ENCODE measurements at regions of chr3 and their contacts with region 1.

Region 1: GRCh38 chr3:196528639-196529233 is 13.6 kb upstream of the SMCO1 start:
- DNase-seq: peak; percentile 87
- ATAC-seq: peak; percentile 89
- H3K4me3 Mint-ChIP-seq: peak overlapping the region; percentile 53
- H3K27ac Mint-ChIP-seq: no peak overlapping the region
- H3K4me1 Mint-ChIP-seq: peaks cover 12% of the 10 kb centered on the region
- H3K27me3 Mint-ChIP-seq: peaks cover 11% of the 10 kb centered on the region
- CTCF ChIP-seq: peak; percentile 81

Region 2: GRCh38 chr3:195806211-195806915 is 722.4 kb before region 1 on chr3:
- CTCF ChIA-PET with region 1: no interaction called
- POLR2A ChIA-PET with region 1: no interaction called
- DNase-seq: peak; percentile 73
- ATAC-seq: peak; percentile 77
- H3K4me3 Mint-ChIP-seq: peak overlapping the region; percentile 39
- H3K27ac Mint-ChIP-seq: peak overlapping the region; percentile 98
- H3K4me1 Mint-ChIP-seq: peaks cover 84% of the 10 kb centered on the region
- H3K27me3 Mint-ChIP-seq: peaks cover 4% of the 10 kb centered on the region
- CTCF ChIP-seq: no peak

Region 3: DNA sequence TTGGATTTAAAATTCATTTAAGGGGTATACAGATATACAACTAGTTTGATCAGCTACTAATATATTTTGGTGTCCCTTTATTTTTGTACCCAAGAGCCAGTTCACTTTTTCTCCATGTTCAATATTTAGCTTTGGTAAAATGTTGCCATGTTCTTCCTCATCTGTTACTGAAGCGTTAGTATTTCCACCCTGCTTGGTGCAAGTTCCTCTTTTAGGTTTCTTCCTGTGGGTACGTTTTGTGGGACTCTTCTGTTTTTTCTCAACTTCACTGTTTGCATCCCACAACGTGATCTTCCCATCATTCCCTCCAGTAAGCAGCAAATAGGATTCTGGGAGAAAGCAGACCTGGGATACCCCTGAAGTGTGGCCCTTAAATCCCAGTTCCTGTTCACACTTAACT is 25.5 kb after region 1 on chr3:
- CTCF ChIA-PET with region 1: interaction called, 10 read pairs
- POLR2A ChIA-PET with region 1: no interaction called
- DNase-seq: no peak
- ATAC-seq: no peak
- H3K4me3 Mint-ChIP-seq: no peak overlapping the region
- H3K27ac Mint-ChIP-seq: no peak overlapping the region
- H3K4me1 Mint-ChIP-seq: no peaks in the 10 kb centered on the region
- H3K27me3 Mint-ChIP-seq: peaks cover 2% of the 10 kb centered on the region; the same call in 1 of the 2 replicates
- CTCF ChIP-seq: no peak

Region 4: GRCh38 chr3:196568246-196569002 is 39.7 kb after region 1 on chr3 and contains the starts of genes FBXO45 and WDR53:
- CTCF ChIA-PET with region 1: interaction called, 15 read pairs
- POLR2A ChIA-PET with region 1: interaction called, 7 read pairs
- DNase-seq: peak; percentile 96
- ATAC-seq: peak; percentile 94
- H3K4me3 Mint-ChIP-seq: peak within 1 kb of the TSS; percentile 99
- H3K27ac Mint-ChIP-seq: peak within 1 kb of the TSS; percentile 98
- H3K4me1 Mint-ChIP-seq: peaks cover 15% of the 10 kb centered on the region
- H3K27me3 Mint-ChIP-seq: no peaks in the 10 kb centered on the region
- CTCF ChIP-seq: no peak
- total RNA-seq, gene FBXO45: 15.0 to 16.1 TPM (median 15.4 TPM) in 3 replicates
- total RNA-seq, gene WDR53: 20.0 to 21.4 TPM (median 21.1 TPM) in 3 replicates

Region 5: GRCh38 chr3:196942226-196942914 is 413.6 kb after region 1 on chr3 and contains the start of gene NCBP2:
- CTCF ChIA-PET with region 1: interaction called, 10 read pairs
- POLR2A ChIA-PET with region 1: interaction called, 3 read pairs
- DNase-seq: peak; percentile 99
- ATAC-seq: peak; percentile 91
- H3K4me3 Mint-ChIP-seq: peak within 1 kb of the TSS; percentile 99
- H3K27ac Mint-ChIP-seq: peak within 1 kb of the TSS; percentile 98
- H3K4me1 Mint-ChIP-seq: peaks cover 31% of the 10 kb centered on the region
- H3K27me3 Mint-ChIP-seq: no peaks in the 10 kb centered on the region
- CTCF ChIP-seq: no peak
- total RNA-seq, gene NCBP2: 96.5 to 100.0 TPM (median 96.9 TPM) in 3 replicates

Measured in WTC11 (cell line).